Mammary epithelial cell (primary cell): ENCODE measurements at regions of chr10 and their contacts with region 1.

Region 1: DNA sequence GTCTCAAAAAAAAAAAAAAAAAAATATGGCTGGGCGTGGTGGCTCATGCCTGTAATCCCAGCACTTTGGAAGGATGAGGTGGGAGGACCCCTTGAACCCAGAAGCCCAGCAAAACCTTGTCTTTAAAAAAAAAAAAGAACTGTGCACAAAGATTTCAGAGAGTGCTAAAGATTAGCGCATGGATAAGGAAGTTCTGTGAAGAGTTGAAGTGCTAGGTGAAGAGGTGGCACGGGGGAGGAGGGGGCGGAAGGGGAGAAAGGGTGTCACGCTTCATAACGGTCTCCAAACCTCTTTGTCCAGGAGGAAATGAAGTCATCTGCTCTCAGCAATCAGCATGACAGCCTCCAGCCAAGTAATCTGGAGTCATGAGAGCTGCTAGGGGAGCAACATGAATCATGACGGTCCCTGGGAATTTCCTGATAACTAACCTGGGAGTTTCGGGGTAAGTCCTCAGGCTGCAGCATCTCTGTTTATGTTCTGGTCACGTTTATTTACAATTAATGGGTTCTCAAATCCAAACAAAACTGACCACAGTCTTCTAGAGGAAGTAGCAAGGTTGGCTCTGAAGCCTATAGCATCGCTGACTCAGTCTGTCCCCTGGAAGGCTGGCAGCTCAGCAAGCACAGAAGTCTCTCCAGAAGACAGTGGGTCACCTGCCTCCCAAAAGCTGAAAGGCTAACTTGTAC is 1.9 kb upstream of the PLAU start:
- DNase-seq: peak; percentile 100
- H3K4me3 ChIP-seq: no peak overlapping the region
- H3K27ac ChIP-seq: peak overlapping the region; percentile 90
- H3K4me1 ChIP-seq: peaks cover 67% of the 10 kb centered on the region
- H3K27me3 ChIP-seq: no peaks in the 10 kb centered on the region
- CTCF ChIP-seq: no peak

Region 2: GRCh38 chr10:73931767-73932619 is 23.0 kb after region 1 on chr10:
- CTCF ChIA-PET with region 1: no interaction called
- dilution Hi-C with region 1: no loop called
- in situ Hi-C with region 1: no loop called
- intact Hi-C with region 1: loop called (anchors 1 kb)
- DNase-seq: peak; percentile 100
- H3K4me3 ChIP-seq: no peak overlapping the region
- H3K27ac ChIP-seq: peak overlapping the region; percentile 91
- H3K4me1 ChIP-seq: peaks cover 19% of the 10 kb centered on the region
- H3K27me3 ChIP-seq: no peaks in the 10 kb centered on the region
- CTCF ChIP-seq: no peak

Region 3: GRCh38 chr10:73940634-73941221 is 31.7 kb after region 1 on chr10:
- CTCF ChIA-PET with region 1: interaction called, 3 read pairs
- dilution Hi-C with region 1: no loop called
- in situ Hi-C with region 1: no loop called
- intact Hi-C with region 1: loop called (anchors 1 kb)
- DNase-seq: peak; percentile 51
- H3K4me3 ChIP-seq: no peak overlapping the region
- H3K27ac ChIP-seq: peak overlapping the region; percentile 55
- H3K4me1 ChIP-seq: peaks cover 21% of the 10 kb centered on the region
- H3K27me3 ChIP-seq: no peaks in the 10 kb centered on the region
- CTCF ChIP-seq: peak; percentile 68 to 98